ENCODE measurements at regions of chr1 and their contacts with region 1.

Region 1: DNA sequence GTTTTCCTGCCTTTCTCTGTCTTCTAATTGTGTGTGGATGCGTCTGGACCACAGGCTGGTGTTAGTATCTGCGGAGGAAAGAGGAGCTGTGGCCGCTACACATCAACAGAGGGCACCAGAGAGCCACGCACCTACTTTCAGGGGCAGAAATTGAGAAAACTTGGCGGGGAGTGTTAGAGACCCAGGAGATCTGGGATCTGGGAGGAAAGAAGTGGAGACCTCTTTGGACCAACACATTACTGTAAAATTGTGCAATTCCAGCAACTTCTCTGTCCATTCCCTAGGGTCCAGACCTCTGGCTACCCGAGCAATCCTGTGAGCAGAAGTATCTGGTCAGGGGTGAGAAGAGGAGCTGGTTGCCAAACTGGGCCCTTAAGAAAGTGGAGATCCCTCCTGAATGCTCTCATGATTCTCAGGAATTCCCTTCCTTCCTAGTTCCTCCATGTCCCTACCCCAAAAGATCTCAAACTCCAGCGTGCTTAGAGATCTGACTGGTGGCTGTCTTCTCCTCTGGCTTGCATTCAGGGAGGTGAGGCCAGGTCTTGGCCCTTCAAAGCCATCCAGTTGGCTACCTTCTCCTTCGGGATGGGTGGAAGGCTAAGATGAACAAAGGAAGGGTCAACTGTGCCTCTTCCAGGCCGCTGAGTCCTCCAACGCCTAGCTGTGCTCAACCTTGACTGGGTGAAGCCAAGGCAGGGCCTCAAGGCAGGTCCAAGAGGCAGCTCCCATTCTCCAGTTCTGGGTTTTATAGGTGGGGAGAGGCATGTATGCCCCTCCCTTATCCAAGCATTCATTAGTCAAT is 1.2 kb upstream of the KIRREL1 start:
- DNase-seq: peak; percentile 91
- H3K4me3 ChIP-seq: peak overlapping the region; percentile 97
- H3K27ac ChIP-seq: peak overlapping the region; percentile 99
- H3K4me1 ChIP-seq: peaks cover 30% of the 10 kb centered on the region
- H3K27me3 ChIP-seq: no peaks in the 10 kb centered on the region
- CTCF ChIP-seq: peak; percentile 99

Region 2: GRCh38 chr1:158035976-158036583 is 43.8 kb after region 1 on chr1:
- CTCF ChIA-PET with region 1: interaction called, 24 read pairs
- POLR2A ChIA-PET with region 1: no interaction called
- intact Hi-C with region 1: loop called (anchors 1 kb)
- DNase-seq: peak; percentile 72
- H3K4me3 ChIP-seq: no peak overlapping the region
- H3K27ac ChIP-seq: no peak overlapping the region
- H3K4me1 ChIP-seq: peaks cover 59% of the 10 kb centered on the region
- H3K27me3 ChIP-seq: no peaks in the 10 kb centered on the region
- CTCF ChIP-seq: peak; percentile 89

Region 3: DNA sequence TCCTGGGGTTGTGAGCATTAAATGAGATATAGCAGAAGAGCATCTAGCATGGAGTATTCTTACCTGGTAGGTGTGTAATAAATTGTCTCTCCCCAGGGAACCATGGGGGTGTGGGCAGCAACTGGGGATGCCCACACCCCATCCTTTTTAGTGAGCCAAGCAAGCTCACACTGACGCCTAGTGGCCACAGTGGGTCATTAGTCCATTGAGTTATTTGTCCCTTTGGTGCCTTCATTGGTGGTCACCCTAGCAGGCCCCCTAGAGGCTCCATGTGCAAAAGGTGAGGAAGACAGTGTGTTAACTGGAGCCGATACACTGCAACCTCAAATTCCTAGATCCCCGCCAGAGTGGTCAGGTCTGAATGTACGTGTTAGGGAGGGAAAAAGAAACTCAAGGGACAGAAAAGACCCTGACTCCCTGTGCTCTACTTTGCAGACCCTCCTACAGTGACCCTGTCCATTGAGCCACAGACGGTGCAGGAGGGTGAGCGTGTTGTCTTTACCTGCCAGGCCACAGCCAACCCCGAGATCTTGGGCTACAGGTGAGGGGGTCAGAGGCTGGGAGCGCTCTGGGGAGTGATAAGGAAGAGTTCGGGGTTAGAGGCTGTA is 95.2 kb after region 1 on chr1:
- CTCF ChIA-PET with region 1: interaction called, 28 read pairs
- POLR2A ChIA-PET with region 1: no interaction called
- intact Hi-C with region 1: loop called (anchors 1 kb)
- DNase-seq: peak; percentile 87
- H3K4me3 ChIP-seq: no peak overlapping the region
- H3K27ac ChIP-seq: peak overlapping the region; percentile 45
- H3K4me1 ChIP-seq: no peaks in the 10 kb centered on the region
- H3K27me3 ChIP-seq: no peaks in the 10 kb centered on the region
- CTCF ChIP-seq: peak; percentile 94

Measured in A673 (cell line).